Thyroid gland (tissue), 4 donors: ENCODE measurements at regions of chr1 and their contacts with region 1.

Region 1: GRCh38 chr1:156659994-156660751 is 17.0 kb downstream of the NES start:
- DNase-seq: peak; percentile 89 to 93
- H3K4me3 ChIP-seq: no peak overlapping the region
- H3K27ac ChIP-seq: peak overlapping the region; percentile 55 to 71 (median 57)
- H3K4me1 ChIP-seq: peaks cover 19 to 72% of the 10 kb centered on the region in 2 donors
- H3K27me3 ChIP-seq: no peaks in the 10 kb centered on the region
- CTCF ChIP-seq: peak; percentile 85 to 99 (median 94)
- POLR2A ChIP-seq: no peak

Region 2: GRCh38 chr1:156560585-156561183 is 99.5 kb before region 1 on chr1:
- intact Hi-C with region 1: no loop called
- DNase-seq: no peak
- H3K4me3 ChIP-seq: no peak overlapping the region
- H3K27ac ChIP-seq: no peak overlapping the region
- H3K4me1 ChIP-seq: no peaks in the 10 kb centered on the region
- H3K27me3 ChIP-seq: no peaks in the 10 kb centered on the region
- CTCF ChIP-seq: no peak
- POLR2A ChIP-seq: no peak

Region 3: GRCh38 chr1:156583821-156584622 is 76.2 kb before region 1 on chr1:
- intact Hi-C with region 1: loop called (anchors 5 kb)
- DNase-seq: peak; percentile 78 to 79
- H3K4me3 ChIP-seq: no peak overlapping the region
- H3K27ac ChIP-seq: no peak overlapping the region
- H3K4me1 ChIP-seq: no peaks in the 10 kb centered on the region
- H3K27me3 ChIP-seq: no peaks in the 10 kb centered on the region
- CTCF ChIP-seq: peak; percentile 78 to 94 (median 87)
- POLR2A ChIP-seq: no peak